Mammary epithelial cell (primary cell): ENCODE measurements at regions of chr11 and their contacts with region 1.

Region 1: GRCh38 chr11:60251485-60252212 is 8.7 kb upstream of the MS4A4E start:
- DNase-seq: peak; percentile 34
- H3K4me3 ChIP-seq: no peak overlapping the region
- H3K27ac ChIP-seq: no peak overlapping the region
- H3K4me1 ChIP-seq: no peaks in the 10 kb centered on the region
- H3K27me3 ChIP-seq: peaks cover 8% of the 10 kb centered on the region
- CTCF ChIP-seq: peak; percentile 48 to 67

Region 2: DNA sequence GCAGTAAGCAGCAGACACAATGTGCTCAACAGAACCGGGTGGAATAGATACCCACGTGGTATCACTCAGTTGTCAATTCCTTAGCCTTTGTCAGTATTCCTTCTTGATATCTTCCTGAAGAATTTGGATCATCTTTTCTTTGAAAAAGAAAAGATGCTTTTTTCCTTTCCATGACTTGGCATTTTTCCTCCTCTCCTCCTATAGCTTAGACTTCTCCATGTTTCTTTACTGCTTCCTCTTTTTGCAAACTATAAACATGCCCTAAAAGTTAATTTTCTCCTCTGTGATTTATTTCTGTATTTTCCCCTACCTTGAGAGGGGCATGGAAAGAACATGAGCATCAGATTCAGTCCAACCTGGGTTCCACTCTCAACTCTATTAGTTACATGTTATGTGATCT is 418.0 kb before region 1 on chr11:
- CTCF ChIA-PET with region 1: no interaction called
- dilution Hi-C with region 1: no loop called
- in situ Hi-C with region 1: loop called in 1 of 2 experiments (anchors 10 kb)
- intact Hi-C with region 1: no loop called
- DNase-seq: no peak
- H3K4me3 ChIP-seq: no peak overlapping the region
- H3K27ac ChIP-seq: no peak overlapping the region
- H3K4me1 ChIP-seq: no peaks in the 10 kb centered on the region
- H3K27me3 ChIP-seq: no peaks in the 10 kb centered on the region
- CTCF ChIP-seq: no peak

Region 3: DNA sequence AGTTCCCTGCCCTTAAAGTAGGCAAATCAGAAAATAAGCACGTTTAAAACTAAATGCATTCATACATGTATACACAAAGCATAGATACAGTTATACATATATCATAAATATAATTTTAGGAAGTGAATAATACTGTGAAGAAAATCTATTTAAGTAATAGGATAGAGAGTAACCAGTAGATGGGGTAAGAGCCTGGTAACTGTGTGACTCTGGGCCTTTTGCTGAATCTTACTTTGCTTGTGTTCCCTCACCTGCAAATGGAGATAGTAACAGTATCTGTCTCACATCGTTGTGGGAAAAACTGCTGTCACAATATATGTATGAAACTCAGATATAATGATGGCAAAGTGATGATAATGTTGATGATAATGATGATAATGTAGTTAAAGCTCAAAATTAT is 133.3 kb before region 1 on chr11:
- CTCF ChIA-PET with region 1: interaction called, 4 read pairs
- dilution Hi-C with region 1: no loop called
- in situ Hi-C with region 1: no loop called
- intact Hi-C with region 1: loop called (anchors 1 kb)
- DNase-seq: peak; percentile 22
- H3K4me3 ChIP-seq: no peak overlapping the region
- H3K27ac ChIP-seq: no peak overlapping the region
- H3K4me1 ChIP-seq: peaks cover 3% of the 10 kb centered on the region
- H3K27me3 ChIP-seq: no peaks in the 10 kb centered on the region
- CTCF ChIP-seq: peak; percentile 18 to 32

Region 4: GRCh38 chr11:60594529-60594928 is 342.9 kb after region 1 on chr11:
- CTCF ChIA-PET with region 1: no interaction called
- dilution Hi-C with region 1: no loop called
- in situ Hi-C with region 1: no loop called
- intact Hi-C with region 1: no loop called
- DNase-seq: no peak
- H3K4me3 ChIP-seq: no peak overlapping the region
- H3K27ac ChIP-seq: no peak overlapping the region
- H3K4me1 ChIP-seq: no peaks in the 10 kb centered on the region
- H3K27me3 ChIP-seq: no peaks in the 10 kb centered on the region
- CTCF ChIP-seq: no peak